HCT116 (cell line): ENCODE measurements at regions of chr4 and their contacts with region 1.

Region 1: GRCh38 chr4:3346146-3346545 is 53.3 kb downstream of the RGS12 start:
- DNase-seq: peak; percentile 47
- ATAC-seq: peak; percentile 96
- H3K4me3 ChIP-seq: no peak overlapping the region
- H3K27ac ChIP-seq: no peak overlapping the region
- H3K4me1 ChIP-seq: no peaks in the 10 kb centered on the region
- H3K27me3 ChIP-seq: no peaks in the 10 kb centered on the region
- CTCF ChIP-seq: peak; percentile 76 to 90 (median 80)
- POLR2A ChIP-seq: no peak
- RAD21 ChIP-seq: peak; percentile 82

Region 2: GRCh38 chr4:2832349-2833239 is 513.6 kb before region 1 on chr4:
- CTCF ChIA-PET with region 1: no interaction called
- POLR2A ChIA-PET with region 1: no interaction called
- RAD21 ChIA-PET with region 1: no interaction called
- intact Hi-C with region 1: no loop called
- DNase-seq: no peak
- ATAC-seq: no peak
- H3K4me3 ChIP-seq: no peak overlapping the region
- H3K27ac ChIP-seq: no peak overlapping the region
- H3K4me1 ChIP-seq: no peaks in the 10 kb centered on the region
- H3K27me3 ChIP-seq: no peaks in the 10 kb centered on the region
- CTCF ChIP-seq: no peak
- POLR2A ChIP-seq: no peak
- RAD21 ChIP-seq: no peak

Region 3: DNA sequence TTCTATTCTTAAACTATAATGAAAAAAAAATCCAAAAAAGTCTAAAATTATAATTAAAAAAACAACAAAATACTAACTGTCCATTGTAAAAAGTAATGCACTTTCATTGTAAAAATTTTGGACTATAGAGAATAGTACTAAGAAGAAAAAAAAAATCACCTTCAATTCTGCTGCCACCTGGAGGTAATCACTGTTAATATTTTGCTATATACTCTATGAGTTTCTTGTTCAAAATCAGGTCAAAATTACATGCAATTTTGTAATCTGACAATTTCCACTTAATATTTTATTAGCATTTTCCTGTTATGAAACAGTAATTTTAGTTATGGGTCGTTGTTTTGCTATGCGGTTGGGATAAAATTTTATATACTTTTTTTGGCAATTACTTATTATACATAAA is 209.7 kb before region 1 on chr4:
- CTCF ChIA-PET with region 1: no interaction called
- POLR2A ChIA-PET with region 1: no interaction called
- RAD21 ChIA-PET with region 1: no interaction called
- intact Hi-C with region 1: no loop called
- DNase-seq: no peak
- ATAC-seq: no peak
- H3K4me3 ChIP-seq: no peak overlapping the region
- H3K27ac ChIP-seq: no peak overlapping the region
- H3K4me1 ChIP-seq: no peaks in the 10 kb centered on the region
- H3K27me3 ChIP-seq: no peaks in the 10 kb centered on the region
- CTCF ChIP-seq: peak; percentile 7 to 39 (median 27); a peak in 2 of 6 replicates
- POLR2A ChIP-seq: no peak
- RAD21 ChIP-seq: 0 out of 2 replicates have a peak, but pooled peaks have one; percentile 19

Region 4: DNA sequence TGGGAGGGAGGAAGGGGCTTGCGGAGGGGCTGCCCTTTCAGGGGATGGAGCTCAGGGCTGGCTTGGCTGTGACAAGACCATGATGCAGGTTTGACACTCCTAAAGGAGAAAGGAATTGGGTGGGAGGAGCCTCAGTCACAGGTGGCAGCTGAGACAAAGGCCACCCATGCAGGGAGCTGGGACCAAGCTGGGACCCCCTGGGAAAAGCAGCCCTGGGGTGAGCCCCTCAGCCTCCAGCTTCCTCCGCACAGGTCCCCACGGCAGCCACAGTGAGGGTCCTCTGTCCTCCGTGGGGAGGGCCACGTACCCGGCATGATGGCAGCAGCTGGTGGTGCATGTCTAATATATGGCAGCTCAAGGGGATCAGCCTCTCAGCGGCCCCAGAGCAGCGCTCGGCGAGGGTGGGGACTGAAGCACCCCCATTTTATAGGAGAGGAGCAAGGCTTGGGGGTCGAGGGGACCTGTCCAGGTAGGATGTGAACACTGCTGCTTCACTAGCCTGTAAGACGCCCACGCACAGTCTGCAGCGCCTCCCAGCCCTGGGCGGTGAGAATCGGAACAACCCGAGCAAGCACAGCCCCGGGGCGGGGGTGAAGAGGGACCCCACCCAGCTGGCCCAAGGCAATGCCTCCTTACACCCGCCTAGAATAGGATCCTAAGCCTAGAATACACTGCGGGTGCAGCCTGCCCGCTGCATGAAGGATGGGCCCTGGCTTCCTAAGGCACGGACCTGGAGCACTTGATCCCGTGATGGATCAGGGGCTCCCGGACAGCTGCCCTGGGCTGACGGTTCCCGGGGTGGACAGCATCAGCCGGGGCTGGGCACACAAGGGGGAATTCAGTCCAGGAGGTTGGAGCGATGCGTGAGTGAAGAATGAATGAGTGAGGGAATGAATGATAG is 437.5 kb after region 1 on chr4:
- CTCF ChIA-PET with region 1: interaction called, 4 read pairs
- POLR2A ChIA-PET with region 1: no interaction called
- RAD21 ChIA-PET with region 1: no interaction called
- intact Hi-C with region 1: loop called (anchors 2 kb)
- DNase-seq: no peak
- ATAC-seq: peak; percentile 77
- H3K4me3 ChIP-seq: peak overlapping the region; percentile 4 to 6; a peak in 3 of 4 replicates
- H3K27ac ChIP-seq: peak overlapping the region; percentile 20; the same call in 1 of the 2 replicates
- H3K4me1 ChIP-seq: peaks cover 62 to 67% of the 10 kb centered on the region in 2 experiments
- H3K27me3 ChIP-seq: no peaks in the 10 kb centered on the region
- CTCF ChIP-seq: peak in 2 of 3 experiments; percentile 77 to 79; a peak in 4 of 6 replicates
- POLR2A ChIP-seq: no peak
- RAD21 ChIP-seq: no peak